ENCODE measurements at regions of chr9 and their contacts with region 1.

Region 1: DNA sequence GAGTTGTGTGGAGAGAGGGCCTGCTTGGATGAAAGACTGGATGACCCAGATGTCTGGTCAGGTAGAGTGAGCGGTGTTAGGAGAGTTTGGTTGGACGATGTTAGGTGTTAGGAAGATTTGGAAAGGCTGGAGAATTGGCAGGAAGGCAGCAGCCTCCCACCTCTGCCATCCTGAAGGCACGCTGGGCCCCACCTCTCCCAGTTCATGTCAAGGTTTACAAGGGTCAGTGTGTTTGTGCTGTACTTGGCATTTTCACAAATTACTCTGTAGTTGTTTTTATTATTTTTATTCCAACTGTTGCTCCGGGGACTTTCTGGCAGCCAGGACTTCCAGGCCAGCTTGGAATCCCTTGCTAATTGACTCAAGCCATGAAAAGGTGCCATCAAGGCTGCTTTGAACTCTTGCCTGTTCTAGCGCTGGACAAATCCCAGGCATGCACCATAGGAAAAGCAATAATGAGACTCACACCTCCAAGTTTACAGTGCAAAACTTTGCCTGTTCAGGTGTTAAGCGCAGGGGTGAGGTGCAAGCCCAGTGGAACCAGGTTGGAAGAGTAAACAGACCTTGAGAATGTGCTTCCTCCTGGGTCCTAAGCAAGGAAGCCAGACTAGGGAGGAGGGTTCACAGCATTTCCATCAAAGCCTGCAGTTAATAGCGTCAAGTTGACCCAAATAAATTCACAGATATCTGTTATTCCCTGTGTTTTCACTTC is 41.7 kb upstream of the KLF9 start:
- DNase-seq: no peak
- H3K4me3 ChIP-seq: no peak overlapping the region
- H3K27ac ChIP-seq: no peak overlapping the region
- H3K4me1 ChIP-seq: no peaks in the 10 kb centered on the region
- H3K27me3 ChIP-seq: no peaks in the 10 kb centered on the region
- CTCF ChIP-seq: no peak

Region 2: GRCh38 chr9:70519912-70520724 is 64.0 kb after region 1 on chr9:
- CTCF ChIA-PET with region 1: no interaction called
- POLR2A ChIA-PET with region 1: no interaction called
- intact Hi-C with region 1: loop called (anchors 2 kb)
- DNase-seq: no peak
- H3K4me3 ChIP-seq: no peak overlapping the region
- H3K27ac ChIP-seq: no peak overlapping the region
- H3K4me1 ChIP-seq: no peaks in the 10 kb centered on the region; the same call in 1 of the 2 replicates
- H3K27me3 ChIP-seq: no peaks in the 10 kb centered on the region
- CTCF ChIP-seq: no peak

Measured in PC-9 (cell line).